ENCODE measurements at regions of chr20 and their contacts with region 1.

Region 1: GRCh38 chr20:37404461-37404890 is 58.5 kb downstream of the SRC start:
- DNase-seq: no peak
- ATAC-seq: no peak
- H3K4me3 ChIP-seq: no peak overlapping the region
- H3K27ac ChIP-seq: no peak overlapping the region
- H3K4me1 ChIP-seq: no peaks in the 10 kb centered on the region
- H3K27me3 ChIP-seq: no peaks in the 10 kb centered on the region

Region 2: DNA sequence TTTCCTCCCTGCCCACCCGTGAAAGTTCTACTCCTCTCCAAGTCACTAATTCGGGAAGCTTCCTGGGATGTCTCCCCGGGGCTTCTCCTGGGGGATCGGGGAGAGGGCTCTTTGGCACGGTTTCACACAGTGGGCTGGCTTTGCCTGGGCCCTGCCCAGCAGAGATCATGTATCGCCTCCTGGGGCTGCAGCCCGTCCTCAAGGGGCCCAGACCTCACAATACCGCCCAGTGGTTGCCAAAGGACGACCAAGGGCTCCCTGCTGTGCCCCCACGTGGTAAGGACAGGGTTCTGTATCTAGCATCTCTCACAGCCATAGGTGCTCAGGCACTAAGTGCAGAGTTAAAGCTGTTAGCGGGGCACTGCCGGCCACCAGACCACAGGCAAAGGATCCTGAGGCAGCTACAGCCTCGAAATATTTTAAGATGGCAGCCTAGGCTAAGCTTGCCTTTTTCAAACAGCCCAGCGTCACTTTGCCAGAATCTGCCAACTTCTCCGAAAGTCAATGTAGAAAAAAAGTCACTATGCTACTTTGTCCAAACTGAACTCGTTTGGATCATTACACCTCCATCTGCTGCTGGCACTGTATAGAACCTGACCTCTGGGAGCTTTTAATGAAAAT is 115.1 kb after region 1 on chr20:
- intact Hi-C with region 1: loop called in 1 of 2 experiments (anchors 5 kb)
- DNase-seq: no peak
- ATAC-seq: no peak
- H3K4me3 ChIP-seq: no peak overlapping the region
- H3K27ac ChIP-seq: no peak overlapping the region
- H3K4me1 ChIP-seq: no peaks in the 10 kb centered on the region
- H3K27me3 ChIP-seq: no peaks in the 10 kb centered on the region

Measured in aorta (tissue), 5 donors.